Activated naive CD4-positive, alpha-beta T cell treated with anti-CD3 and anti-CD28 coated beads for 36 hours (primary cell): ENCODE measurements at regions of chr11 and their contacts with region 1.

Region 1: GRCh38 chr11:17978553-17979287 is 34.1 kb downstream of the SERGEF start:
- DNase-seq: peak; percentile 36
- H3K4me3 Mint-ChIP-seq: no peak overlapping the region
- H3K27ac Mint-ChIP-seq: no peak overlapping the region
- H3K4me1 Mint-ChIP-seq: no peaks in the 10 kb centered on the region
- H3K27me3 Mint-ChIP-seq: no peaks in the 10 kb centered on the region

Region 2: DNA sequence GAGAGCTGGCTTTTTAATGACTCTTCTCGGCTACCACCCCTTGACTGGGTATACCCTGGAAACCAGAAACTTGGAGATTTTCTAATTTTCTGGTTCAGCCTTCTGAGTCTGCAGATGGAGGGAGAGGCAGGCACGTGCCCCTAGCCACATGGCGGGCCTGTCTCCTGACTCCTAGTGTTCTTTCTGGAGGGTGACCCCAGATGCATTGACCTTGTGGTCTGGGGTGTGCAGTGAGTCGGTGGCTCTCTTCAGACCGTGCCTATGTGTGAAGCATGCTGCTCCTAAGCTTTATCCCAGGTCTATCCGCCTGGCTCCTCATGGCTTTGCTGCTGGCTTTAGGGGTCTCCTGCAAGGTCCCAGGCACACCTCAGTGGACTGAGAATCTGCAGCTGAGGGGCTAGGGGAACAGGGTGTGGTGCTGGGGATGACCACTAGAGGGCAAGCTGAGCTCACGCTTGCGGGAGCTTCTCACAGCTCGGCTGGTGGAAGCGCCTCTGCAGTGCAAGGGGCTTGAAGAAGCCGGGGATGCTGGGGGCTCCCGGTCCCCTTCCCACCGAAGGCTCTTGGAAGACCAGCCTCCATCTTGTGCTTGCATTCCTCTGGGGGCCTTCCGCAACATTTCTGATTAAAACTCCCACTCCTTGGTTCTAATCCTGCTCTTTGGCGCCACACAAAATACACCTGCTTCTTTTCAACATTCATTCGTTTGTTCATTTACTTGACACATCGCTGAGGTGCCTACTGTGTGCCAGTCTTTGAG is 379.8 kb before region 1 on chr11:
- CTCF ChIA-PET with region 1: interaction called, 10 read pairs
- intact Hi-C with region 1: loop called (anchors 1 kb)
- DNase-seq: peak; percentile 83
- H3K4me3 Mint-ChIP-seq: no peak overlapping the region
- H3K27ac Mint-ChIP-seq: no peak overlapping the region
- H3K4me1 Mint-ChIP-seq: peaks cover 3% of the 10 kb centered on the region
- H3K27me3 Mint-ChIP-seq: no peaks in the 10 kb centered on the region

Region 3: DNA sequence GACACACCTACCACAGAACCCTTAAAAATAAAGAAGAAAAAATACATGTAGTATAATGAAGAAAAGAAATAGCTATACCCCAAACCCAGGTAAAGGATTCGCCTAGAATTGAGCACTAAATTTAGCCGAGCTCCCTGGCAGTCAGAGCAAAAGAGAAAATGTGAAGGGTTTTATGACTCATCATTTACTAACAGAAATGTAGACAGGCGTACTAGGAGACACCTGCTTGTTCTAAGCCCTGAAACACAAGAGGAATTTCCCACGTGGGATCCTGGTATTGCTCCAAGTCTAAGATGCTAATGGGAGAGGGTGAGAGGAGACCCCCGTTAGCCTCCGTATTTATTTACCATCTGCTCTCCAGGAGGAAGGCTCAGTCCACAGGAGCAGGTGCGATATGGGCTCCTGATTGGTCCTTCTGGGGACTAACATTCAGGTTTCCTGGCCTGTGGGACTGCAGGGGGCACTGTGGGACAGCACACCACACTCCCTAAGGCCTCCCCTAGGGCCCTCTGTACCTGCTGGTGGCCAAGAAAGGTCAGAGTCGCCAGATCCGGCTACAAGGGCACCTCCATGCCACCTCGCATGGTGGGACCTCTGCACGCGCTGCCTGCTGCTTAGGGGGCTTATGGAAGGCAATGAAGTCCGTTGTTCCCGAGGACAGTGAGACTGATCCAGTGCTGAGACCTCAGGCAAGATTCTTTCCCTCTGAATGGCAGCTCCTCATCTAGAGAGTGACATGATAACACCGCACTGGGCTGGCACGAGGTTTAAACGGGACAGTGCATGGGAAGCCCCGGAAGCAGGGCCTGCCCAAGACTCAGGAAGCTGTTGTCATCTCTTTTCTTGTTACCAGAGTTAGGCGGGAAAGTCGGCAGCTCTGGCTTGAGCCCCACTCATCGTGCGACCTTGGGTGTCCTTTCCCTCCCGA is 218.4 kb before region 1 on chr11:
- CTCF ChIA-PET with region 1: interaction called, 7 read pairs
- intact Hi-C with region 1: loop called (anchors 1 kb)
- DNase-seq: peak; percentile 56
- H3K4me3 Mint-ChIP-seq: no peak overlapping the region
- H3K27ac Mint-ChIP-seq: no peak overlapping the region
- H3K4me1 Mint-ChIP-seq: no peaks in the 10 kb centered on the region
- H3K27me3 Mint-ChIP-seq: no peaks in the 10 kb centered on the region

Region 4: GRCh38 chr11:18011633-18012315 is 33.1 kb after region 1 on chr11:
- CTCF ChIA-PET with region 1: no interaction called
- intact Hi-C with region 1: no loop called
- DNase-seq: no peak
- H3K4me3 Mint-ChIP-seq: peak overlapping the region; percentile 97
- H3K27ac Mint-ChIP-seq: peak overlapping the region; percentile 65
- H3K4me1 Mint-ChIP-seq: peaks cover 39% of the 10 kb centered on the region
- H3K27me3 Mint-ChIP-seq: no peaks in the 10 kb centered on the region